CD8-positive, alpha-beta T cell (primary cell): ENCODE measurements at regions of chr1 and their contacts with region 1.

Region 1: GRCh38 chr1:180003026-180003695 is 48.6 kb downstream of the CEP350 start:
- DNase-seq: no peak
- ATAC-seq: no peak
- H3K4me3 ChIP-seq: no peak overlapping the region
- H3K4me3 Mint-ChIP-seq: no peak overlapping the region
- H3K27ac ChIP-seq: no peak overlapping the region
- H3K27ac Mint-ChIP-seq: no peak overlapping the region
- H3K4me1 ChIP-seq: no peaks in the 10 kb centered on the region
- H3K4me1 Mint-ChIP-seq: peaks cover 6% of the 10 kb centered on the region
- H3K27me3 ChIP-seq: no peaks in the 10 kb centered on the region
- H3K27me3 Mint-ChIP-seq: no peaks in the 10 kb centered on the region
- CTCF ChIP-seq: no peak

Region 2: DNA sequence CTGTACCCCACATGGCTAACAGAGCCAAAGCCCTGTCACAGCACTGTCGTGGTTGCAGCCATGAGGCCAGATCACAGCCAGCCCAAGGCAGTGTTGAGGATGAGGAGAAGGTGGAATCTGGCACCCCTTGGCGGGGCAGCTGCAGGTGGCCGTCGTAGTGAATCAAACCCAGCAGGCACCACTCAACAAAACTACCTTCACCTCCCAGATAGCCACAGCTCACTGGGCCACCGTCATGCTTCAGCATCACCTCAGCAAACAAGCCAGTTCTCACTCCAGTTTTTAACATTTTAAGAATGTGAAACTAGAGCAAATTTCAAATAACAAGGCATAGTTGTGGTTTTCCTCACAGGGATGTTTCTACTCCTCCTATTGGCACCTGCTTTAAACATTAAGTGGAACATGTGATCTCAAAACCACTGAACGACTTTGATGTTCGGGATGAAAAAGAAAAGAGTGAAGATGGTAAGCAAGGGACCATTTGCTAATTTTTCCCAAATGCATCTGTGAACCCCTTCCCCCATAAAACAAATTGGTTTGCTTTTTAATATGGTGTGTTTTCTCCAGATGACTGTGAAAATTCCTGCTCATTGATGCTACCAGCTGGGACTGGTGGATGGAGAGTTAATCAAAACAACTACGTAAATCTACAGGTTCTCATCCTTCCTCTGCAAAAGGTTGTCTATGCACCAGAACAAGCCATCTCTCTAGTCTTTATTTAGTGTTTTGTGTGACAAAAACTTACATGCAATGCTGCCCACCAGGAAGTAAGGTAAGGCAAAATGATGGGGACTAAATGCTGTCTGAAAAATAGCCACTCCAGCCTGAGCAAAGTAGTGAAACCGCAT is 171.1 kb before region 1 on chr1:
- CTCF ChIA-PET with region 1: no interaction called
- POLR2A ChIA-PET with region 1: no interaction called
- intact Hi-C with region 1: no loop called
- DNase-seq: peak in 2 of 9 experiments; percentile 47 to 49
- ATAC-seq: peak; percentile 66
- H3K4me3 ChIP-seq: no peak overlapping the region
- H3K4me3 Mint-ChIP-seq: peak overlapping the region; percentile 66
- H3K27ac ChIP-seq: peak overlapping the region; percentile 1 to 8
- H3K27ac Mint-ChIP-seq: peak overlapping the region; percentile 75
- H3K4me1 ChIP-seq: peaks cover 23% of the 10 kb centered on the region
- H3K4me1 Mint-ChIP-seq: peaks cover 24% of the 10 kb centered on the region
- H3K27me3 ChIP-seq: no peaks in the 10 kb centered on the region
- H3K27me3 Mint-ChIP-seq: peaks cover 2% of the 10 kb centered on the region
- CTCF ChIP-seq: no peak

Region 3: DNA sequence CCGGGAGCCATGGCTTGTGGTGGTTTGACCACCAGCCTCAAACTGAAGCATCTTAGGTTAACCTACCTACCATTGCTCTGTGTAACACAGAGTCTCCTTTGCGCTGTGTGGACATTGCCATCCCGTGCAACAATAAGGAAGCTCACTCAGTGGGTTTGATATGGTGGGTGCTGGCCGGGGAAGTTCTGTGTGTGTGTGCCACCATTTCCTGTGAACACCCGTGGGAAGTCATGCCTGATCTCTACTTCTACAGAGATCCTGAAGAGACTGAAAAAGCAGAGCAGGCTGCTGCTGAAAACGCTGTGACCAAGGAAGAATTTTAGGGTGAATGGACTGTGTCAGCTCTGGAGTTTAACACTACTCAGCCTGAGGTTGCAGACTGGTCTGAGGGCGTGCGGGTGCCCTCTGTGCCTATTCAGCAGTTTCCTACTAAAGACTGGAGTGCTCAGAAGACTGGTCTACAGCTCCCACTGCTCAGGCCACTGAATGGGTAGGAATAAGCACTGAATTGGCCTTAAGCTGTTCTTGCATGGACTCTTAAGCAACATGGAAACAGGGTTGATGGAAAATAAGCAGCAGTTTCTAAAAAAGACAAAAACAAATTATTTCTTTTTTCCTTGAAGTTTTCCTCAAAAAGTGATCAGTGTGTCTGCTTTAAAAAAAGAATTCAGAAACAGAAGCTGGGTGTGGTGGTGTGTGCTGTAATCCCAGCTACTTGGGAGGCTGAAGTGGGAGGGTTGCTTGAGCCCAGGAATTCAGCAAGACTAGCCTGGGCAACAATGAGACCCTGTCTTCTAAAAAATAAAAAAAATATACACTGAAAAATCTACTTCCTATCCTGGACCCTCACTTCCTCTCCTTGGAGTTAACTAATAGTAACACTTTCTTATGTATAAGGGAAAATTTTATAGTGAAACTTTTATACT is 33.9 kb before region 1 on chr1:
- CTCF ChIA-PET with region 1: no interaction called
- POLR2A ChIA-PET with region 1: no interaction called
- intact Hi-C with region 1: loop called in 1 of 2 experiments (anchors 5 kb)
- DNase-seq: no peak
- ATAC-seq: no peak
- H3K4me3 ChIP-seq: no peak overlapping the region
- H3K4me3 Mint-ChIP-seq: peak overlapping the region; percentile 37
- H3K27ac ChIP-seq: no peak overlapping the region
- H3K27ac Mint-ChIP-seq: peak overlapping the region; percentile 82
- H3K4me1 ChIP-seq: peaks cover 26% of the 10 kb centered on the region
- H3K4me1 Mint-ChIP-seq: peaks cover 62% of the 10 kb centered on the region
- H3K27me3 ChIP-seq: no peaks in the 10 kb centered on the region
- H3K27me3 Mint-ChIP-seq: no peaks in the 10 kb centered on the region
- CTCF ChIP-seq: no peak

Region 4: GRCh38 chr1:180168786-180169639 is 165.9 kb after region 1 on chr1:
- CTCF ChIA-PET with region 1: no interaction called
- POLR2A ChIA-PET with region 1: no interaction called
- intact Hi-C with region 1: no loop called
- DNase-seq: peak in 3 of 9 experiments; percentile 24 to 46 (median 37)
- ATAC-seq: peak; percentile 59
- H3K4me3 ChIP-seq: no peak overlapping the region
- H3K4me3 Mint-ChIP-seq: no peak overlapping the region
- H3K27ac ChIP-seq: no peak overlapping the region
- H3K27ac Mint-ChIP-seq: no peak overlapping the region
- H3K4me1 ChIP-seq: no peaks in the 10 kb centered on the region
- H3K4me1 Mint-ChIP-seq: peaks cover 4% of the 10 kb centered on the region
- H3K27me3 ChIP-seq: no peaks in the 10 kb centered on the region
- H3K27me3 Mint-ChIP-seq: no peaks in the 10 kb centered on the region
- CTCF ChIP-seq: peak; percentile 17

Region 5: DNA sequence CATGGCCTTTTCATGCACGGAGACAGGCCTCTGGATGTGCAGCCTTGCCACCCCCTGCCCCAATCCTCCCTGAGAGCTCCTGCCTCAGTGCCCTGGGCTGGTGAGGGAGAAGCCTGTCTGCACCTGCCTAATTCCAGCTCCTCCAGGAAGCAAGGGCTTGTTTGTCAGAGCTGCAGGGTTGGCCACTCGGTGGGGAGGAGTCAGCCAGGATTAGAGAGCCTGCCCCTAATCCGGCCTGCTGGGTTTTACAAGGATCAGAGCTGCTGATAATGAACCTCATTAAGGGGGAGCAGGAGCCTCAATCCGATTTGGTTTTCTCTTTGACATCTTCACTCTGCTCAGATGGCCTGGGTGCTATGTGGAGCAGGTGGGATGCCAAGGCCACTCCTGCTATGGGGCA is 195.0 kb after region 1 on chr1:
- CTCF ChIA-PET with region 1: no interaction called
- POLR2A ChIA-PET with region 1: no interaction called
- intact Hi-C with region 1: no loop called
- DNase-seq: no peak
- ATAC-seq: no peak
- H3K4me3 ChIP-seq: no peak overlapping the region
- H3K4me3 Mint-ChIP-seq: no peak overlapping the region
- H3K27ac ChIP-seq: no peak overlapping the region
- H3K27ac Mint-ChIP-seq: no peak overlapping the region
- H3K4me1 ChIP-seq: no peaks in the 10 kb centered on the region
- H3K4me1 Mint-ChIP-seq: no peaks in the 10 kb centered on the region
- H3K27me3 ChIP-seq: no peaks in the 10 kb centered on the region
- H3K27me3 Mint-ChIP-seq: no peaks in the 10 kb centered on the region
- CTCF ChIP-seq: no peak